Right lobe of liver (tissue), 6 donors: ENCODE measurements at regions of chr2 and their contacts with region 1.

Region 1: DNA sequence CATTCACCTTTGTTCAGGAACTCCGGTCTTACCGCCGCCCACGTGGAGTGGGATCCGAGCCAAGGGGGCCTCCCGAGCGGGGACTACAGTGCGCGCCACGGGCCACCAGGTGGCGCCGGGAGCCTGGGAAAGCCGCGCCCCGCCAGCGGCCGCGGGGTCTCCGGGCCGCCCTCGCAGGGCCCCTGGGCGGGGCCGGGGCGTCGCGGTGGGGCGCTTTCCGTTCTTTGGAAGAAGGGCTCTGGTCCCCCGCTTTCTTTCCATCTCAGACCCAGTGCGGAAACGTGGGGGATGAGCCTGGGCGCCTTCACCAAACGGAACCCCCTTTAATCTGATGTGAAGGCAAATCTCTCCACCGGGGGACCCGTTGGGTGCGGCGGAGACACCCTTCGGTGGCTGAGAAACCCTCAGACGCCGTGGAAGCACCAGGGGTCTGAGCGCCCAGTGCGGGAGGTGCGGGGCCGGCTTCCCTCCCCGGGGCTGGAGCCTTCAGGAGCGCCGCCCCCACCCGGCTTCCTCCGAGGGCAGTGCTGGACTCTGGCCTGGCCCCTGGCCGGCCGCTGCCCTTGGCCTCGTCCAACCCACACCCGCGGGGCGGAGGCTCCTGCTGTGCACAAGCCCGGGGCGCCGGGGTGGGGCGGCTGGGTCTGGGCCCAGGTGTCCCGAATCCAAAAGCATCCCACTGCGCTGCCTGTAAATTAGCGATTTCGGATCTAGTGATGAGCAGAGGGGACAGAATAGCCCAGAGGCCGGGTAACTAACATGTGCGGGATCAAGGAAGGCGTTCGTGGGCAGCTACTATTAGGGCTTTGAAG is 44.6 kb downstream of the GORASP2 start:
- DNase-seq: peak; percentile 92 to 94 (median 93)
- ATAC-seq: peak; percentile 90 to 96 (median 94)
- H3K4me3 ChIP-seq: peak overlapping the region; percentile 58 to 85 (median 74)
- H3K27ac ChIP-seq: peak overlapping the region; percentile 72 to 77 (median 73)
- H3K4me1 ChIP-seq: peaks cover 0 to 22% (median 8%) of the 10 kb centered on the region in 4 donors
- H3K27me3 ChIP-seq: no peaks in the 10 kb centered on the region
- CTCF ChIP-seq: peak; percentile 96 to 99 (median 98)
- POLR2A ChIP-seq: peak; percentile 44

Region 2: DNA sequence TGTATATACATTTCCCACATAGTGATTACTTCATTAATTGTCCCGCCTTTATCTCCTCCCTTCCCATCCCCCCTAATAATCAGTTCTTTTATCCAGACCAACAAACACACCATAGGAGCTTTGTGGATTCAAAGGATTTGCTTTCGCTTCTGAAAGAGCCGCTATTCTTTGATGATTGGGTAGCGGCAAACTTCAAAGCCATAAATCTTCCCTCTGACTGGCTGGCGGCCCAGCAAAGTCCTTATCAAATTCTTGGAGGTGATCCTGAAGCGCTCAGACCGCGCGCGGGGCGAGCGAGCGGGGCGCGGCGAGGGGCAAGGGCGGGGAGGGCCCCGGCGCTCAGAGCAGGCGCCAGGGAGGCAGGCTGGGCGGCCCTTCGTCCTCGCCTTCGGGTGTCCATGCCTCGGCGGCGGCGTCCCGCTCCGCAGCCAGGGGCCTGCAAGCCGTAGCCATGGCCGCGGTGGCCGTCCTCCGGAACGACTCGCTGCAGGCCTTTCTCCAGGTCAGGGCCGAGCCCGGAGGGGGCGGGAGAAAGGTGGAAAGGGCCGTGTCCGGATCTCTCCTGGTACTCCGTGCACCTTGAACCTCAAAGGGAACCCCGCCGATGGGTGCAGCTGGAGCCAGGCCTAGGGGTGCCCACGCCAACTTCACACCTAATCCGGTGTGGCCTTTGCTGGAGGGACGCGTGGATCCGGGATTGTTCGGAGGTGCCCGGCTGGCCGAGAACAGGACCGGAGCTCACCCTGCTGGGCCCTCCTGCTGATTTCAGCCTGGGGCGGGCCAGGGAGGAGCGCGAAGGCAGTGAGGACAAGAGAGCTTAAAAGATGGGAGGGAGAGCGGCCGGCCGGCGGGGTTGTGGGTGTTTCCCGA is 258.4 kb before region 1 on chr2 and contains the start of gene SP5:
- intact Hi-C with region 1: no loop called
- DNase-seq: peak; percentile 65 to 80 (median 79)
- ATAC-seq: peak; percentile 69 to 72 (median 69)
- H3K4me3 ChIP-seq: peak within 1 kb of the TSS; percentile 51 to 72 (median 64)
- H3K27ac ChIP-seq: peak within 1 kb of the TSS; percentile 22 to 81 (median 53)
- H3K4me1 ChIP-seq: peaks cover 0 to 14% (median 2%) of the 10 kb centered on the region in 4 donors
- H3K27me3 ChIP-seq: peaks cover 0 to 4% of the 10 kb centered on the region in 2 donors
- CTCF ChIP-seq: peak in 1 of 4 donors; percentile 11
- POLR2A ChIP-seq: no peak
- total RNA-seq, gene SP5: 1.4 to 16.0 (median 1.9) TPM

Region 3: DNA sequence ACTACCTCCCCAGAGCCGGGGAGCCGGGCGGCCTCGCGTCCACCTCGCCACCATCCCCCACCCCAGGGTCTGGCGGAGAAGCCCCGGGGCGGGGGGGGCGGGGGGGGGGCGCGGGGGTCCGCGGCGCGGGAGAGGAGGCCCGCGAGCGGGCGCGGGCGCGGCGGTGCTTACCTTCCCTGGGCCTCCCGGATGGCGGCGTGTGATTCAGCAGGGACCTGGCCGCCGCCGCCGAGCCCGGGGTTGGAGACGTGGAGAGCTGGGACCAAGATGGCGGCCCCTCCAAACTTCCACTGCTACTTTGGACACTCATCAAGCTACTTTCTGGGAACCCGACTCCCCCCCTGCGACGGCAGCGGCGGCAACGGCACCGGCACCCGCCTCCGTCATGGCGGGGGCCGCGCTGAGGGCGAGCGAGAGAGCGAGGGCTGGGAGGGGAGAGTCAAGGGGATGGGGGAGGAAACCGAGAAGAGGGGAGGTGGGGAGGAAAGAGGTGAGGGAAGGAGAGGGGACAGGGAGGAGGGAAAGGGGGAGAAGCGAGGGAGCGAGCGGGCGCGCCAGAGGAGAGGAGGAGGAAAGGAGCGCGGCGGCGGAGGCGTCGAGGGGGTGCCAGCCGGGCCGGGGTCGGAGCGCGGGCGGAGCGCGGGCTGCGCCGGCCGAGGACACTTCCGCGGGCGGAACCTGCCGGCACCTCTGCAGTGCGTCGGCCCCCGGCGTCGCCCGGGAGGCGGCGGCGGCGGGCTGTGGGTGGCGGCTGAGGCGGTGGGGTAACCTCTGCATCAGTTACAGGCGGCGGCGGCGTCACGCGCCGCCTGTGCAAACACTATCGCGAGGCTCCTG is 186.6 kb after region 1 on chr2 and contains the start of gene TLK1:
- intact Hi-C with region 1: loop called in 1 of 2 experiments (anchors 5 kb)
- DNase-seq: peak; percentile 78 to 87 (median 83)
- ATAC-seq: peak; percentile 64 to 81 (median 79)
- H3K4me3 ChIP-seq: peak within 1 kb of the TSS; percentile 71 to 76 (median 76)
- H3K27ac ChIP-seq: peak within 1 kb of the TSS; percentile 75 to 91 (median 88)
- H3K4me1 ChIP-seq: peaks cover 0 to 35% (median 2%) of the 10 kb centered on the region in 4 donors
- H3K27me3 ChIP-seq: no peaks in the 10 kb centered on the region
- CTCF ChIP-seq: no peak
- POLR2A ChIP-seq: peak; percentile 72
- total RNA-seq, gene TLK1: 18.4 to 40.2 (median 29.0) TPM

Region 4: GRCh38 chr2:171416009-171416926 is 442.6 kb after region 1 on chr2:
- intact Hi-C with region 1: loop called in 1 of 2 experiments (anchors 10 kb)
- DNase-seq: peak; percentile 88 to 91 (median 88)
- ATAC-seq: peak; percentile 100
- H3K4me3 ChIP-seq: peak overlapping the region in 1 of 3 donors; percentile 8
- H3K27ac ChIP-seq: no peak overlapping the region
- H3K4me1 ChIP-seq: peaks cover 0 to 4% (median 0%) of the 10 kb centered on the region in 4 donors
- H3K27me3 ChIP-seq: no peaks in the 10 kb centered on the region
- CTCF ChIP-seq: peak; percentile 81 to 87 (median 86)
- POLR2A ChIP-seq: no peak